Heart left ventricle (tissue), 16 donors: ENCODE measurements at regions of chr2 and their contacts with region 1.

Region 1: GRCh38 chr2:182186132-182186735 is 200.6 kb downstream of the PPP1R1C start:
- DNase-seq: no peak
- ATAC-seq: peak in 2 of 4 donors; percentile 36 to 55
- H3K4me3 ChIP-seq: no peak overlapping the region
- H3K27ac ChIP-seq: peak overlapping the region in 3 of 12 donors; percentile 3 to 36 (median 20)
- H3K4me1 ChIP-seq: peaks cover 0 to 12% (median 4%) of the 10 kb centered on the region in 12 donors
- H3K27me3 ChIP-seq: no peaks in the 10 kb centered on the region
- CTCF ChIP-seq: peak; percentile 73 to 90 (median 84)
- POLR2A ChIP-seq: no peak

Region 2: DNA sequence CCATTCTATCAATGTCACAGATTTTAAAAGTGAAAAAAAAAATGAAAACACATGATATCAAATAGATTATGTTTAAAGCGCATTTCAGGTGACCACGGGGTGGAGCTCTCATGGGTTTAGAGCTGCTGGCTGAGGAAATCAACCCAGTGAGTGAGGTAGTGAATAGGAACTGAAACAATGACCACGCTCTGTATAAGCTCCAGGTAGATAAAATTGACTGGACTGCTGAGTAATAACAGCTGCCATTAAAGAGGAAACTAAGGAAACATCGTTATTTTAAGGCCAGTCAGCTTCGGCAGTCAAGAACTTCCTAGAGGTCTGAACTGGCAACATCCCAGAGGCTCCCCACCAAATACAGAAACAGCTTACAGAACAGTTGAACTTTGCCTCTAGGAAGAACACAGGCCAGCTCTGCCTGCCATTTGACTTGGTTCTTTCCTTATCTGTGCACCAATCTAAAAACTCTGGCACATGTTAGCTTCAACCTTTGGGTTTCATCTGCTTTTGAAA is 54.7 kb after region 1 on chr2:
- intact Hi-C with region 1: no loop called
- DNase-seq: peak in 1 of 5 donors; percentile 28
- ATAC-seq: peak; percentile 35 to 72 (median 58)
- H3K4me3 ChIP-seq: no peak overlapping the region
- H3K27ac ChIP-seq: peak overlapping the region in 1 of 12 donors; percentile 21
- H3K4me1 ChIP-seq: peaks cover 0 to 14% (median 4%) of the 10 kb centered on the region in 12 donors
- H3K27me3 ChIP-seq: no peaks in the 10 kb centered on the region
- CTCF ChIP-seq: peak in 10 of 12 donors; percentile 18 to 52 (median 32)
- POLR2A ChIP-seq: no peak

Region 3: GRCh38 chr2:182650704-182651103 is 464.5 kb after region 1 on chr2:
- intact Hi-C with region 1: loop called (anchors 1 to 2 kb)
- DNase-seq: no peak
- ATAC-seq: peak in 2 of 4 donors; percentile 53 to 70
- H3K4me3 ChIP-seq: no peak overlapping the region
- H3K27ac ChIP-seq: no peak overlapping the region
- H3K4me1 ChIP-seq: peaks cover 0 to 14% (median 0%) of the 10 kb centered on the region in 12 donors
- H3K27me3 ChIP-seq: no peaks in the 10 kb centered on the region
- CTCF ChIP-seq: peak; percentile 37 to 68 (median 57)
- POLR2A ChIP-seq: no peak